ENCODE measurements at regions of chr15 and their contacts with region 1.

Region 1: DNA sequence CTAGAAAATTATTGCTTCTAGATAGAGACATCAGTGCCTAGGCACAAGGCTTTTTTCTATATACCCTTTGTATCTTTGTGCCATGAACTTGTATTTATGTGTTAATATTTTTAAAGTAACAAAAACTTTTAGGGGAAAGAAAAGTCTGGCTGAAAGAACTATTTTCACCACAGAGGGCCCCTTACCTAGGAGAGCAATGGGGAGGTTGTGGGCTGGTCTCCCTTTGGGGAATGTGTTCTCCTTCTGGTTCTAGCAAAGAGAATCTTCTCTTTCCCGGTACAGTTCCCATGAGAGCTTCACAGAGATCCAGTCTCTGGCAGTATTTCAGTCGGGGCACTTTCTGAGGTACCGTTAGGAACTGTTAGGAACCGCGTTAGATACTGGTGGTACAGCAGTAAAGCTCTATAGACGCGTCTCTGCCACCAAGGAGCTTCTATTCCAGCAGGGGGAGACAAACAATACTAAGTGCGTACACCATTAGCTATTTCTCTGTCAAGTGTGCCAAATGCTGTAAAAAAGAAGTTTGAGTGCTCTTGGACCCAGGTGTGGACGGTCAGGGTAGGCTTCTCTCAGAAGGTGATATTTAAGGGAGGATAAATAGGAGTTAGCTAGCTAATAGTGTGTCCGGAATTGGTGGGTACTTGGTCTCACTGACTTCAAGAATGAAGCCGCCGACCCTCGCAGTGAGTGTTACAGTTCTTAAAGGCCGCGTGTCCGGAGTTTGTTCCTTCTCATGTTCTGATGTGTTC is 4.6 kb upstream of the EPB42 start:
- DNase-seq: peak; percentile 79
- CTCF ChIP-seq: peak; percentile 72

Region 2: DNA sequence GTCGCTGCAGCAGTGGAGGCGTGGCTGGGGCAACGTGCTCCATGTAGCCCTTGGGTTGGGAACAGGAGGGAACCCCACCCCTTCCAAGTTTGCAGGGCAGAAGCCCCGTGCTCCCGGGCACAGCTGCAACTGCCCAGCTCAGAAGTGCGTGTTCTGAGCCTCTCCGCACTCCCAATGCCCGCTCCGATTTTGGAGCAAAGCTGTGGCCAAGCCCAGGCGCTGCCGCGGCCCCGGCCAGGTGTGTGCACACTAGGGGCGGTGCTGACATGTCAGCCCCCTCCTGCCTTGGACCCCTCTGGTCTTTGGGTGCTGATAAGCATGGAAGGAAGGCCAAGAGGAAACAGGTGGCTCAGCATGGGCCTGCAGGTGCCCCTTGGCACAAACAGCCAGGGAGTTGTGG is 217.2 kb before region 1 on chr15:
- CTCF ChIA-PET with region 1: no interaction called
- POLR2A ChIA-PET with region 1: no interaction called
- DNase-seq: no peak
- CTCF ChIP-seq: no peak

Region 3: GRCh38 chr15:43204016-43204901 is 21.1 kb before region 1 on chr15:
- CTCF ChIA-PET with region 1: interaction called, 25 read pairs
- POLR2A ChIA-PET with region 1: no interaction called
- DNase-seq: peak; percentile 69
- CTCF ChIP-seq: peak; percentile 75

Region 4: DNA sequence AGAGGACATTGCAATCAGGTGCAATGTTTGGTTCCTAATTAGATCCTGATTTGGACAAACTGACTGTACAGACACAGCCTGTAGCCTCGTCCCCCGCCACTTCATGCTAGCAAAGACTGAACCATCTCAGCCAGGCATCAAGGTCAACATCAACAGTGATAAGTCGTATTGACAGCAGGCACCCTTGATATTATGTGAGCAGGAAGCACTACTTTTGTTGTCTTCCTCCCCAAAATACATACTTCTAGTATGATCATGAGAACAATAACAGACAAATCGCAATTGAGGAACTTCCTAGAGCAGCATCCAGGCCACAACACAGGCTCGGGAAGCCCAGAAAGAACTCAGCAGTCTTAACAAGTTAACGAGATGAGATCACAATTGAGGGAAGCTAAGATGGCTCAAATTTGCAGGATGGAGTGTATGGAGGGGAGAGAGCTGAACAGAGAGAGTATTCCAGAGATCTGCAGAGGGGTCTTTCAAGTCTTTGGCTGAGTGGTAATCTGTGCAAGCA is 20.9 kb after region 1 on chr15:
- CTCF ChIA-PET with region 1: interaction called, 72 read pairs
- POLR2A ChIA-PET with region 1: no interaction called
- DNase-seq: no peak
- CTCF ChIP-seq: no peak

Region 5: GRCh38 chr15:43260011-43260615 is 34.7 kb after region 1 on chr15:
- CTCF ChIA-PET with region 1: interaction called, 250 read pairs
- POLR2A ChIA-PET with region 1: no interaction called
- DNase-seq: no peak
- CTCF ChIP-seq: no peak

Region 6: GRCh38 chr15:43274136-43274535 is 48.8 kb after region 1 on chr15:
- CTCF ChIA-PET with region 1: interaction called, 250 read pairs
- POLR2A ChIA-PET with region 1: interaction called, 4 read pairs
- DNase-seq: no peak
- CTCF ChIP-seq: no peak